A673 (cell line): ENCODE measurements at regions of chr22 and their contacts with region 1.

Region 1: DNA sequence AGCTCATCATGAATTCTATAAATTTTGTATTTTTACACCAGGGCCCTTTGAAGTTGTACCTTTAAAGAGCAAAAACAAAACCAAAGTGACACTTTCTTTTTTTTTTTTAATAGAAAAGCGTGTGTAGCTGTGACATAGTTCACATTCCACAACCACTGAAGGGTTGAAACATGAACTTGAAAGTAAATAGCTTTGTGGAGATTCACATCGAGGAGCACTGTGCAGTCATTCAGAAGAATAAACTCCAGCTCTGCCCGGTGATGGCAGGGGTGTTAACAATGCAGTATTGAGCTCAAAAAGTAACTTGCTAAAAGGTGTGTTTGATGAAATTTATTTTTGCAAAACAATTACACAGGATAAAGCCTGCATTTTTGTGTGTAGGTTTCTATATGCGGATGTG is 1166.2 kb downstream of the TBC1D22A start:
- DNase-seq: no peak
- H3K4me3 ChIP-seq: no peak overlapping the region
- H3K27ac ChIP-seq: no peak overlapping the region
- H3K4me1 ChIP-seq: no peaks in the 10 kb centered on the region
- H3K27me3 ChIP-seq: no peaks in the 10 kb centered on the region
- CTCF ChIP-seq: no peak

Region 2: DNA sequence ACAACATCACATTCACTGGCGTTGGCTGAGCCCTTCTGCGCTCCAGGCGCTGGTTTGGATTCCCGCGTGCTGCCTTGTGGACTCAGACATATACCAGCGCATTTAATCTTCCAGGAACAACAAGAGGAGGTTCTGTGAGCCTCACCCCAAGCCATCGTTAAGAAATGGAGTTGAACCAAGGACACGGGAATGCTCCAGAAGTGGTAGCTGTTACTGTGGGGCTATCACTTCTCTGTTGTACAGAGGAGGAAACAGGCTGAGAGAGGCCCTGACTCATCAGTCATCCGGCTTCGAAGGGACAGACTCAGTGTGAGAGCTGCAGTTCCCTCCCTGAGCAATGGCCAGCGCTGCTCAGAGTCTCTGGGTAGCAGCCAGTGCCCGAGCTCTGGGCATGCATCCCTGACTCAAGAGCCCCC is 874.9 kb before region 1 on chr22:
- CTCF ChIA-PET with region 1: no interaction called
- POLR2A ChIA-PET with region 1: no interaction called
- intact Hi-C with region 1: no loop called
- DNase-seq: no peak
- H3K4me3 ChIP-seq: no peak overlapping the region
- H3K27ac ChIP-seq: no peak overlapping the region
- H3K4me1 ChIP-seq: no peaks in the 10 kb centered on the region
- H3K27me3 ChIP-seq: no peaks in the 10 kb centered on the region
- CTCF ChIP-seq: no peak

Region 3: GRCh38 chr22:47715866-47716578 is 212.6 kb before region 1 on chr22:
- CTCF ChIA-PET with region 1: no interaction called
- POLR2A ChIA-PET with region 1: interaction called, 12 read pairs
- intact Hi-C with region 1: no loop called
- DNase-seq: no peak
- H3K4me3 ChIP-seq: no peak overlapping the region
- H3K27ac ChIP-seq: no peak overlapping the region
- H3K4me1 ChIP-seq: no peaks in the 10 kb centered on the region
- H3K27me3 ChIP-seq: peaks cover 3% of the 10 kb centered on the region
- CTCF ChIP-seq: no peak

Region 4: DNA sequence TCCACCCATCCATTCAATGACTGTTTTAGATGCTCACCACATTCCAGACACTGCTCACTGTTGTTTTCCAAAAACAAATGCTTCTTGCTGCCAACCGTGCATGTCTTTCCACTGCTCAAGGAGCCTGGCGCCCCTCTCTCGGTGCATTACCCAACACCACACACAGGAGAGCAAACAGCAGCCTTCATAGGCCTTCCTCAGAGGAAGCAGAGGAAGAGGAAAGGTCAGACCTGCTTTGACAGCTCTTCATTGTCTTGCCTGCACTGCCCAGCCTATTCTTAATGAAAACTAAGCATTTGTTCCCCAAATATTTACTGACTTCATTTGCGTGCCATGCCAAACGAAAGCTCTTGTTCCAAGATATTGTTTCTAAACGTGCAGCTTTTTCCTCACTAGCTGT is 37.0 kb before region 1 on chr22:
- CTCF ChIA-PET with region 1: no interaction called
- POLR2A ChIA-PET with region 1: no interaction called
- intact Hi-C with region 1: no loop called
- DNase-seq: no peak
- H3K4me3 ChIP-seq: no peak overlapping the region
- H3K27ac ChIP-seq: no peak overlapping the region
- H3K4me1 ChIP-seq: no peaks in the 10 kb centered on the region
- H3K27me3 ChIP-seq: no peaks in the 10 kb centered on the region
- CTCF ChIP-seq: no peak